ENCODE measurements at regions of chr17 and their contacts with region 1.

Region 1: GRCh38 chr17:4966844-4967538 is 626 bp downstream of the SPAG7 start:
- DNase-seq: peak; percentile 99
- H3K27ac ChIP-seq: peak overlapping the region; percentile 98
- CTCF ChIP-seq: no peak

Region 2: DNA sequence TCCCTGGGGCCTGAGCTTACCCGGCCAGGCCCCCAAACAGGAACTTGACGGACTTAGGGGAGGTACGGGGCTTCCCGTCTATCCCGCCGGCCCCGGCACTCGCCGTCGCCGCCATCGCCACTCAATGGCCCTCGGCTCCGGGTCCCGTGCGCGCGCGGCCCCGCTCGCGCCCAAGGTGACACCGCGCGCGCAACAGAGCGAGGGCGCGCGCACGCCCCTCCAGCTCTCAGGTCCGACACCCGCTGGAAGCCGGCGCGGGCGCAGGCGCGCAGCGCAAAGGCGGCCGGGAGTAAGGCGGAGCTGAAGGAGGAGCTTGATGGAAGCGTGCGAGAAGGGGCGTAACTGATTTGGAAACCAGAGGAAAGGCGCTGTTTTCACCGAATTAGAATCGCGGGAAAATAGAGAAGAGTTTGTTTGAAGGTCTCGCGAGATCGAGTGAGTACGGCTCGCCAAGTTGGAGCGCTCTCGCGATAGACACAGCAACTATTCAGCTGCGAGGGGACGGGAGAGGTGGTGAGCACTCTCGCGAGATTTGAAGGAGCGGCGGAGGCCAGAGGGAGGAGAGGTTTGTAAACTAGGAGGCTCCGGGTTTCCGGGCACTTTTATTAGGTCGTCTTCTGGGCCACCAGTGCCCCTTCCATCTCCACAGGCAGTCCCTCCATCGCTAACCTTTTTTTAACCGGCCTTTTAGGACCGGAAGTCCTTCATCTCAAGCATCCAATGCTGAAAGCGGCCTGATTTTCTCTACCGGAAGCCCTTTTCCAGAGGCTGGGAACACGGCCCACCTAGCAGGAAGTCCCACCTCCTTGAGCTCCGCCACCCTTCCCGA is 27.0 kb before region 1 on chr17 and contains the starts of genes RNF167 and SLC25A11:
- CTCF ChIA-PET with region 1: interaction called, 3 read pairs
- POLR2A ChIA-PET with region 1: interaction called, 10 read pairs
- DNase-seq: peak; percentile 98
- H3K27ac ChIP-seq: peak within 1 kb of the TSS; percentile 98
- CTCF ChIP-seq: no peak

Region 3: DNA sequence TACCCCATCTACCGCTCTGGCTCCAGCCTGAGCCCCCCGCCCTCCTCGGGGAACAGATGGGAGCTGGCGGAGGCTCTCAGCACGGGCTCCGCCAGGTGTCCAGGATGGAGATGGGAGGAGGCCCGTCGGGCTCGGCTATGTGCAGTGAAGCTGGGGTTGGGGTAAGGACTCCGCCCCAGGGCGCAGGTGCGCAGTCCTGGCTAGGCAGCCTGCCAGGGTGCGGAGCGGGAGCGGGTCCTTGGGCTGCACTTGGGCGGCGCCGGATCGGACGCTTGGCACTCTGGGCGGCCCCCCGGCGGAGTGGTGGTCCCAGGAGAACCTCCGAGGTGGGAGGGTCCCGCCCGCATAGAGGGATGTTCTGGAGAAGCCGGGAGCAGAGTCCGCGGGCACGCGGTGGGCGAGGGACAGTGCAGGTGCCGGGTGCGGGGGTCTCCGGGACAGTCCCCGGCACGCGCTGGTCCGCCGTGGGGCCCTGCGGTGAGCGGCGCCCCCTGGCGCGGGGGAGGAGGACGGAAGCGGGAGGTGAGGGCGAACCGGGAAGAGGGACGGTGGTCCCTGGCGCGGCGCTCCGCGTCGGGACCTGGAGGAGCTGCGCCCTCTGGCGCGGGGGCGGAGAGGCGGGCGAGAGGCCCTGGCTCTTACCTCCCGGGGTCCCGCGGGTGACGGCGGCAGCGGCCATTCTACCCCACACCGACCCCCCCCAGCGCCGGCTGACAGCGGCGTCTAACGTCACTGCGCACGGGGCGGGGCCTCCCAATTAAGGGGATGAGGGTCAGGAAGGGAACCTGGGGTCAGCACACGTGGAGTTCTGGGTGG is 20.2 kb after region 1 on chr17 and contains the start of gene CAMTA2:
- CTCF ChIA-PET with region 1: no interaction called
- POLR2A ChIA-PET with region 1: interaction called, 10 read pairs
- DNase-seq: peak; percentile 77
- H3K27ac ChIP-seq: peak within 1 kb of the TSS; percentile 87
- CTCF ChIP-seq: peak; percentile 85

Region 4: GRCh38 chr17:5000237-5000639 is 33.2 kb after region 1 on chr17:
- CTCF ChIA-PET with region 1: interaction called, 5 read pairs
- POLR2A ChIA-PET with region 1: interaction called, 16 read pairs
- DNase-seq: no peak
- H3K27ac ChIP-seq: peak overlapping the region; percentile 89
- CTCF ChIP-seq: no peak